ENCODE measurements at regions of chr7 and their contacts with region 1.

Region 1: GRCh38 chr7:45217358-45217757 is 59.8 kb downstream of the RAMP3 start:
- DNase-seq: peak; percentile 13
- H3K4me3 Mint-ChIP-seq: no peak overlapping the region
- H3K27ac Mint-ChIP-seq: no peak overlapping the region
- H3K4me1 Mint-ChIP-seq: peaks cover 6% of the 10 kb centered on the region
- H3K27me3 Mint-ChIP-seq: peaks cover 85% of the 10 kb centered on the region
- CTCF ChIP-seq: peak; percentile 33

Region 2: GRCh38 chr7:45203936-45204445 is 13.4 kb before region 1 on chr7:
- CTCF ChIA-PET with region 1: interaction called, 10 read pairs
- POLR2A ChIA-PET with region 1: interaction called, 3 read pairs
- intact Hi-C with region 1: no loop called
- DNase-seq: peak; percentile 41
- H3K4me3 Mint-ChIP-seq: peak overlapping the region; percentile 63
- H3K27ac Mint-ChIP-seq: peak overlapping the region; percentile 75
- H3K4me1 Mint-ChIP-seq: peaks cover 26% of the 10 kb centered on the region
- H3K27me3 Mint-ChIP-seq: peaks cover 39% of the 10 kb centered on the region
- CTCF ChIP-seq: no peak